PC-9 (cell line): ENCODE measurements at regions of chr17 and their contacts with region 1.

Region 1: DNA sequence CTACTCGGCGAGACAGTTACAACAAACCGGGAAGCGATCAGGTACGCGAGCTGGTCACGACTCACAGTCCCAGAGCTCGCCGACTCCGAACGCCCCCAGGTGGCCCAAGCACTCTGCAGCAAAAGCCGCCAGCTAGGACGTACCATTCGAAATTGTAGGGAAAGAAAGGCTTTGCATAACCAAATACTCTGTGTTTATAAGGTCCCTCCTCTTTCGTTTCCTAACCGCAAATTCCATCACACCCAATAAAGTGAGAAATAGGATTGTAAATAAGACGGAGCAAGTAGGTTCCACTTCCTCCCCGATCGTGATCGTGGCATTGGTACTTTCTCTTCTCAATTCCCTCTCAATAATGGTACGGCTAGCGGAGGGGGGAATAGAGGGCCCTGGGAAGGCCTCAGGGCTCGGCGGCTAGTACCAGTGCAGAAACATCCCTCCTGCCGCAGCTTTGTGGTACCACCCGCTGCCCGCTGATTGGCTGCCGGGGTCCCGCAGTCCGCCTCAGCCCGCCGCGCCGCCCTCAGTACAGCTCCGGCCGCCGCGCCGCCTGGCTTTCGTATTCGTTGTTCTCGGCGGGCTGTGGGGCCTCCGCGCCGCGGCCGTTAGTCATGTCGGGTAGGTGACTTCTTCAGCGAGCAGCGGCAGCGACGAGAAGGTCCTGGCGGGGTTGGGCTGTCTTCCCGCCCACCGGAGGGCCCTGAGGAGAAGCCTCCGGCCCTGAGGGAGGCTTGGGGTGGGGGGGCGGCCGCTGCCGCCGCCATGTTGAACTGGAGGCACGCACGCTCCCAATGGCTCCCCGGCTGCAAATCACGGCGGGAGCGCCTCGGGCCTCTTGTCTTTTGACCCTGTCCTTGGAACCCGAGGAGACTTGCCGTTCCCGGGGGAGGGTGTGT is at the start of gene TAF15:
- DNase-seq: peak; percentile 94 to 95
- H3K4me3 ChIP-seq: peak within 1 kb of the TSS; percentile 97
- H3K27ac ChIP-seq: peak within 1 kb of the TSS; percentile 98
- H3K4me1 ChIP-seq: peaks cover 39% of the 10 kb centered on the region
- H3K27me3 ChIP-seq: no peaks in the 10 kb centered on the region
- CTCF ChIP-seq: peak; percentile 72
- total RNA-seq, gene TAF15: 187 and 202 TPM in 2 replicates

Region 2: DNA sequence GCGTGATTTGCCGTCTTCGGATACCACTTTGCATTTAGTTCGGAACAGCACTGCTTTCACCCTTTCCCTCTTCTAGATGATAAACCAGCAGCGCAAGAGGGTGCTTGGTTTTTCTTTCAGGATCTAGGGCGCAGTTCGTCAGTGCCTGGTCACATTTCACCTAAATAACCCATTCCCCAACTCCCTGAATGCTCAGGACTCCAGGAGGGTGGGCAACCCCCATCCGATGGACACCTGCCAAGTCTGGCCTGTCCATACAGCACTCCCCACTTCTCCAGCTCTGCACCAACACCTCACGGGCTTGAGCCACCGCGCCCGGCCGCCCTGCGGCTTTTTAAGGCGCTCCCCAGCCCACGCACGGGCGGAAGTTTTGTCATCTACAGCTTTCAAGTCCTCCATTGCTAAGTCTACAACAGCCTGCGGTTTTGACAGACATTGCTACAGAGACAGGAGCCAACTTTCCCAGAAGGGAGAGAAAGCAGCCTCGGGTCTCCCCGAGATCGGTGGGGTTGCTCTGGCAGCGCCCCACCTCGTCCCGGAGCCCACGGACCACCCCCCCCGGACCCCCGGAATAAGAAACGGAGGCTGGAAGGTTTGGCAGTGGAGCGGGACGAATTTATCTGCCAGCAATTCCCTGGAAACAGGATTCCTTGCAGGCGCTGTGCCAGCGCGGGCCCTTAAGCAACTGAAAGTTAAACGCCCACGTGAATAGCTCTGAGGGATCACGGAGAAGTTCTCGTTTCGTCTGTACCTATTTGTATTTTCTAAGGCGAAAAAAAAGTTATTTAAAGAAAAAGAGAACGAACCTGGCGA is 322.1 kb before region 1 on chr17:
- CTCF ChIA-PET with region 1: interaction called, 23 read pairs
- POLR2A ChIA-PET with region 1: no interaction called
- intact Hi-C with region 1: no loop called
- DNase-seq: no peak
- H3K4me3 ChIP-seq: no peak overlapping the region
- H3K27ac ChIP-seq: no peak overlapping the region
- H3K4me1 ChIP-seq: no peaks in the 10 kb centered on the region
- H3K27me3 ChIP-seq: peaks cover 65% of the 10 kb centered on the region
- CTCF ChIP-seq: no peak

Region 3: DNA sequence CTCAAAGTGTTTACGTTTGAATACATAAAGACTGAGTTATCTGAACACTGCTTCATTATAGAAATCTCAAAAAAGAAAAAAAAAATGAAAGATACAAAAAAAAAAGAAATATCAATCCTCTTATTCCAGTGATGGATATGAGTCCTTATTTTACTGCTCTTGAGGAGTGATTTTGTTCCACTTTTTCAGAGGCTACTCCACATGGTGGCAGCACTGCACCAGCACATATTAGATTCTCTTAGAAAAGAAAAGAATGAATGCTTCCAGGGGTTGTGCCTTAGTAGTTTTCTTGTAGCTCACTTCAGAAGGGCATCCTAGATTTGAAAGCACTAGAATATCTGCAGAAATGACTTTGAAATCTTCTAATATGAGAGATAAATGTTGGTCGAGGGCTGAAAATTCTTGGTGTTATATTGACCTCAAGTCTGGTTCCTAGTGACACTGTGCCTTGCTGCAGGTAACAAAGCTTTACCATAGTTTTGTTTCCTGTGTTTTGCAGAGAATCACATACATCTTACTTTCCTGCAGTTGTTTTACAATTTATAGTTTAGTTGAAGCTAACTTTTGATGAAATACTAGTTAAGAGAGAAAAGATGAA is 196.2 kb before region 1 on chr17:
- CTCF ChIA-PET with region 1: no interaction called
- POLR2A ChIA-PET with region 1: no interaction called
- intact Hi-C with region 1: loop called (anchors 10 kb)
- DNase-seq: peak; percentile 9 to 51
- H3K4me3 ChIP-seq: no peak overlapping the region
- H3K27ac ChIP-seq: no peak overlapping the region
- H3K4me1 ChIP-seq: no peaks in the 10 kb centered on the region
- H3K27me3 ChIP-seq: no peaks in the 10 kb centered on the region
- CTCF ChIP-seq: peak; percentile 74

Region 4: DNA sequence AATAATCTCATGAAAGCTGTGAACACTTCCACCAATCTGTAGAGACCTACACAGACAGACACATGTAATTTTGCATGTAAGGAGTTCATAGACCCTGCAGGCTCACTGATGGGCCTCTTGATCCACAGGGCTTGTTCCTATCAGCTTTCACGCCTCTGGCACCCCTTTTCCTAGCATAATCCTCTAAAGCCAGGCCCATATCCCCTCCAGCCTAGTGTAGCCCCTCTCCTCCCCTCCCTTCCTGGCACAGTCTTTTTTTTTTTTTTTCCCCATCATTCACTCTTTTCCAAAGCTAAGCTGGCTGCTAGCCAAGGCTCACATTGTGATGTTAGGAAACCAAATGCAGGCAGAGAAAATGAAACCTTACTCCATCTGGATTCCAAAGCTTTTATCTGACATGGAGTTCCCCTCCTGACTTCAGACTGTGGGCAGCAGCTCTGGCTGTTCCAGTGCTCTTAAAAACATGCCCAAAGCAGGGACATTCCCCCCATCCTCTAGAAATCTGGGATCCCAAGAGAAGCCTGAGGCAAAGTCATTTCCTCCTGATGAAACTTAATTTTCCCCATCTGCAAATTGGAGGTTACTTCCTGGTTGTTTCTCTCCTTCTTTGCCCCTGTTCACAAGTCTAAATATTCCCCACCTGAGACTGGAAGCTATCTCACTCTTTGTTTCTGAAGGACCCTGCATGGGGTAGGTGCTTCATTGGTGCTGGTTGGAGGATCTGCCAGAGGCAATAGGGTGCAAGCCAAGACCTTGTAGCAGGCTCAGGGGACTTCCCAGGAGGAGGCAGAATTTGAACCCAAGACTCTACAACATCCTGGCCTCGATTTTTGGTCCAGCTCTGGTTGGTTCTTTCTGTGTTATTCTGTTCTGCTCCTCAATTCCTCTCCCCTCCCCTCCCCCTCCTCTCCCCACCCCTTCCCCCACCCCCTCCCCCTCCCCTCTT is 80.9 kb after region 1 on chr17:
- CTCF ChIA-PET with region 1: no interaction called
- POLR2A ChIA-PET with region 1: no interaction called
- intact Hi-C with region 1: no loop called
- DNase-seq: peak in 1 of 2 experiments; percentile 18
- H3K4me3 ChIP-seq: no peak overlapping the region
- H3K27ac ChIP-seq: no peak overlapping the region
- H3K4me1 ChIP-seq: no peaks in the 10 kb centered on the region
- H3K27me3 ChIP-seq: no peaks in the 10 kb centered on the region
- CTCF ChIP-seq: no peak

Region 5: DNA sequence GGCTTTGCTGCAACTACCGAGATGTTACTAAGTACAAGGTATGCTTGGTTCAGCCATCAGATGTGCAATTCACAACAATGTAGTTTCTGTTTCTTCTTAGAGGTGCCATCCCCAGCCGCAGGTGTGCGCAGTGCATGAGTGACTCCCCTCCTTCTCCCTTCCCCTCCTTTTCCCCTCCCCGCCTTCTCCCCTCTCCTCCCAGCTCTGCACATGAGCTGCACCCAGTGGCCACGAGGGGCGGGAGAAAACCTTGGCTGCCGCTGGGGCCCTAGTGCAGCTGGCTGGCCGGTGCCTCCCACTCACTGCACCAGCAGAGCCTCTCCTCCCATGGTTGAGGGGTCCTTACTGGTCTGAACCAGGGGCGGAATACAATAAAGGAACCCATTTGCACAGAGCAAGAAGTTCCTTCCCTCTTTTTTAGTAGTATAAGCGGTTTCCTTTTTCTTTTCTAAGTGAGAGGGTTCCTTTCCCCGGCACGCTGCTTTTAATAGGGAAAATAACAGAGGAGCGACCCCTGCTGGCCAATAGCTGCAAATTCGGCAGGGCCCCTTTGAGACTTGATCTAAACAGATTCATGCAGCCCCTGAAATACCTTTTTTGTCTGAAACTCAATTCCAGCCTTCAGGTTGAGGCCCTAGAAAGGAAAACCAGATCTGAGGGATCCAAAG is 199.9 kb after region 1 on chr17:
- CTCF ChIA-PET with region 1: no interaction called
- POLR2A ChIA-PET with region 1: no interaction called
- intact Hi-C with region 1: no loop called
- DNase-seq: no peak
- H3K4me3 ChIP-seq: no peak overlapping the region
- H3K27ac ChIP-seq: no peak overlapping the region
- H3K4me1 ChIP-seq: no peaks in the 10 kb centered on the region
- H3K27me3 ChIP-seq: peaks cover 77% of the 10 kb centered on the region
- CTCF ChIP-seq: peak; percentile 54